ENCODE measurements at regions of chrX and their contacts with region 1.

Region 1: DNA sequence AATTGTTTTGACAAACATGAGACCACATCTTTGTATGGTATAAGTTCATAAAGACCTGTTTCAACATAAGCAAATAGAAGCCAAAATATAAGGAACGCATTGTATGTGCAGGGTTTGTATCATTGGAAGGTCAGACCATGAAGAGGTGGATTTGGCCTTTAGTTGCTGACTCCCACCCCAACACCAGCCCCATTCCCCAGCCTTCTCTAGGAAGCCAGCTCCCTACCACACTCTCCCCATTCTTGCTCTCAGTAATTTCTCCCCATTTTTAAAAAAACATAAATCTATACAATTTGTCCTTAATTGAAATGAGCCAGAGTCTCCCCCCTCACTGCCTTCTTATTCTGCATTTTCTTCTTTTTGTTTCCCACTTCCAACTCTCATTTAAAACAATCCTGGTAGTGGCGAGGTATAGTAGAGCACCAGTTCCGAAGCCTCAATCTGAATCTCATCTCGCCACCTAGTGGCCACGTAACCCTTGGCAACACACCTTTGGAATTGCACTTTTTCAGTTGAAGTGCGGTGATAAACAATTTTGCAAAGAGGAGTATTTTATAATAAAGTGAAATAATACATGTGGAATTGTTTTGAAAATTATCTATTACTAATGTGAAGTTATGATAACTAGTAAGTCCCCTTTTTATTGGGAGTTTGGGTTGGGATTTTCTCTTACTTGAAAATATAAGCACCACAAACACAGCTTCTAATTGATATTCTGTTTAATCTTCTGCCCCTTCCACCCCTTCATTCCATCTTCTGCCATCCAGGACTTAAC is 126.6 kb downstream of the ASB9 start:
- DNase-seq: peak; percentile 45
- ATAC-seq: peak; percentile 85
- H3K4me3 ChIP-seq: no peak overlapping the region
- H3K27ac ChIP-seq: no peak overlapping the region
- H3K4me1 ChIP-seq: no peaks in the 10 kb centered on the region
- H3K27me3 ChIP-seq: peaks cover 2% of the 10 kb centered on the region
- CTCF ChIP-seq: peak; percentile 64
- POLR2A ChIP-seq: no peak
- RAD21 ChIP-seq: peak; percentile 69

Region 2: GRCh38 chrX:14039344-14039743 is 1103.9 kb before region 1 on chrX:
- CTCF ChIA-PET with region 1: interaction called, 3 read pairs
- POLR2A ChIA-PET with region 1: no interaction called
- dilution Hi-C with region 1: no loop called
- in situ Hi-C with region 1: loop called (anchors 10 kb)
- intact Hi-C with region 1: loop called (anchors 2 kb)
- DNase-seq: peak; percentile 37
- ATAC-seq: peak; percentile 70
- H3K4me3 ChIP-seq: no peak overlapping the region
- H3K27ac ChIP-seq: no peak overlapping the region
- H3K4me1 ChIP-seq: no peaks in the 10 kb centered on the region
- H3K27me3 ChIP-seq: peaks cover 7% of the 10 kb centered on the region
- CTCF ChIP-seq: peak; percentile 76
- POLR2A ChIP-seq: no peak
- RAD21 ChIP-seq: peak; percentile 76

Region 3: DNA sequence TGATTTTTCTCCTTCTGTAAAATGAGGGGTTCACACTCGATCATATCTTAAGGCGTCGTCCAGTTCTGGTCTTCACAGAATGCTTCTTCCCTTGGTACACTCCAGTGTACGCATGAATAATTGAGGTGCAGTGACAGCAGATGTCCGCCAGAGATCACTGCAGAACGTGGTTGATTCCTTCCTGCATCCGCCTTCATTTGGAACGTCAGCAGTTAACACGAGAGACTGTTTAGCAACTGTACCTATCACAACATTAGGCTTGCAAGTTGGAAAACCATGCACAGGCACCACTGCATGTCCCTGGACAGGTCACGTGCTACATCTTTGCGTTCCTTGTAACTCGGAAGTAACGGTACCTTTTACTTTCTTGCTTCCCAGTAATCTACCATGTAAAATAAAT is 1047.5 kb before region 1 on chrX:
- CTCF ChIA-PET with region 1: no interaction called
- POLR2A ChIA-PET with region 1: no interaction called
- dilution Hi-C with region 1: no loop called
- in situ Hi-C with region 1: loop called (anchors 5 kb)
- intact Hi-C with region 1: loop called (anchors 1 kb)
- DNase-seq: peak; percentile 53
- ATAC-seq: peak; percentile 90
- H3K4me3 ChIP-seq: no peak overlapping the region
- H3K27ac ChIP-seq: no peak overlapping the region
- H3K4me1 ChIP-seq: no peaks in the 10 kb centered on the region
- H3K27me3 ChIP-seq: no peaks in the 10 kb centered on the region
- CTCF ChIP-seq: peak; percentile 74
- POLR2A ChIP-seq: no peak
- RAD21 ChIP-seq: peak; percentile 86

Region 4: GRCh38 chrX:14712102-14712501 is 431.1 kb before region 1 on chrX:
- CTCF ChIA-PET with region 1: no interaction called
- POLR2A ChIA-PET with region 1: no interaction called
- dilution Hi-C with region 1: no loop called
- in situ Hi-C with region 1: no loop called
- intact Hi-C with region 1: loop called (anchors 10 kb)
- DNase-seq: no peak
- ATAC-seq: no peak
- H3K4me3 ChIP-seq: no peak overlapping the region
- H3K27ac ChIP-seq: no peak overlapping the region
- H3K4me1 ChIP-seq: no peaks in the 10 kb centered on the region
- H3K27me3 ChIP-seq: no peaks in the 10 kb centered on the region
- CTCF ChIP-seq: peak; percentile 13; the same call in 1 of the 2 replicates
- POLR2A ChIP-seq: no peak
- RAD21 ChIP-seq: no peak; the same call in 1 of the 2 replicates

Region 5: GRCh38 chrX:14729058-14729457 is 414.2 kb before region 1 on chrX:
- CTCF ChIA-PET with region 1: no interaction called
- POLR2A ChIA-PET with region 1: no interaction called
- dilution Hi-C with region 1: no loop called
- in situ Hi-C with region 1: no loop called
- intact Hi-C with region 1: no loop called
- DNase-seq: peak; percentile 21
- ATAC-seq: no peak
- H3K4me3 ChIP-seq: no peak overlapping the region
- H3K27ac ChIP-seq: no peak overlapping the region
- H3K4me1 ChIP-seq: no peaks in the 10 kb centered on the region
- H3K27me3 ChIP-seq: no peaks in the 10 kb centered on the region
- CTCF ChIP-seq: no peak
- POLR2A ChIP-seq: no peak
- RAD21 ChIP-seq: no peak

Region 6: DNA sequence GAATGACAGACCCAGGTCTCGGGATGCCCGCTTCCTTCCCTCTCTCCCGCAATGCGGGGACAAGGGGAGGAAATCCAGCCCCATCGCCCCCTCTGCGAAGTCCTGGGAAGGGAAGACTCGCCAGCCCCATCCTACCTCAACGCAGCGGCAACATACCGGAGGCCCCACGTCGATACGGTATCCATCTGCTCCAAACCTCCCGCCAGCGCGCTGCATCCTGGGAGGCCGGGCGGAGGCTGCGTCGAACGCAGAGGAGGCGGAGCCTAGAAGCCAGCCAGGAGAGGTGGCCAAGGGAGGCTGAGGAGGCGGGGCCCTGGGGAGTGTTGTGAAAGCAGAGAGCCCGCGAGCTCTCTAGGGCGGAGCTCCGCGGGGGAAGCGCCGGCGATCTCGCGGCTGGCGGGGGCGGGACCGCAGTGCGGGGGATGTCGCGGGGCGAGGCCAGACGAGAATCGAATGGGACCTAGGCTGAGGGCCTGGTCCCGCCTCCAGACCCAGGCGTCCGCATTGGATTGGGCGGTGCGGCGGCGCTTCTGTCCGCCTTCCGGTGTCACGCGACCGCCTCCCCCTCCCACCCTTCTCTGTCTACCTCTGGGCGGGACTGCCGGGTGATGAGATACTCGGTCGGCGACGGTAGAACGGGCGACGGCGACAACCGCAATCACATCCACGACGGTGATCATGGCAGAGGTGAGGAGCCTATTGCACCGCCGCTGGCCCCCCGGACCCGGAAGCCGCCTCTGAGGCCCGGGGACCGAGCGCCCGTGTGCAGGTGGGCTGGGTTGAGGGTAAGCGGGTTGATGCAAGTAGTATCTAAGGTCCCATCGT is 270.2 kb before region 1 on chrX and contains the starts of genes FANCB and MOSPD2:
- CTCF ChIA-PET with region 1: no interaction called
- POLR2A ChIA-PET with region 1: no interaction called
- dilution Hi-C with region 1: no loop called
- in situ Hi-C with region 1: no loop called
- intact Hi-C with region 1: loop called (anchors 5 kb)
- DNase-seq: peak; percentile 91
- ATAC-seq: peak; percentile 98
- H3K4me3 ChIP-seq: peak within 1 kb of the TSS; percentile 96
- H3K27ac ChIP-seq: peak within 1 kb of the TSS; percentile 74
- H3K4me1 ChIP-seq: no peaks in the 10 kb centered on the region
- H3K27me3 ChIP-seq: no peaks in the 10 kb centered on the region
- CTCF ChIP-seq: no peak
- POLR2A ChIP-seq: no peak
- RAD21 ChIP-seq: no peak
- total RNA-seq, gene FANCB: 7.7 and 14.4 TPM in 2 replicates
- total RNA-seq, gene MOSPD2: 22.2 and 27.8 TPM in 2 replicates

Region 7: GRCh38 chrX:15073313-15073712 is 69.9 kb before region 1 on chrX:
- CTCF ChIA-PET with region 1: no interaction called
- POLR2A ChIA-PET with region 1: no interaction called
- dilution Hi-C with region 1: no loop called
- in situ Hi-C with region 1: no loop called
- intact Hi-C with region 1: no loop called
- DNase-seq: no peak
- ATAC-seq: no peak
- H3K4me3 ChIP-seq: no peak overlapping the region
- H3K27ac ChIP-seq: no peak overlapping the region
- H3K4me1 ChIP-seq: no peaks in the 10 kb centered on the region
- H3K27me3 ChIP-seq: no peaks in the 10 kb centered on the region
- CTCF ChIP-seq: no peak
- POLR2A ChIP-seq: no peak
- RAD21 ChIP-seq: no peak

Region 8: GRCh38 chrX:15242899-15243555 is 99.8 kb after region 1 on chrX:
- CTCF ChIA-PET with region 1: no interaction called
- POLR2A ChIA-PET with region 1: no interaction called
- dilution Hi-C with region 1: no loop called
- in situ Hi-C with region 1: no loop called
- intact Hi-C with region 1: loop called (anchors 2 kb)
- DNase-seq: peak; percentile 59
- ATAC-seq: peak; percentile 62; the same call in 1 of the 2 replicates
- H3K4me3 ChIP-seq: no peak overlapping the region
- H3K27ac ChIP-seq: no peak overlapping the region
- H3K4me1 ChIP-seq: no peaks in the 10 kb centered on the region
- H3K27me3 ChIP-seq: peaks cover 2% of the 10 kb centered on the region
- CTCF ChIP-seq: peak; percentile 62
- POLR2A ChIP-seq: no peak
- RAD21 ChIP-seq: peak; percentile 62